Activated CD4-positive, alpha-beta memory T cell treated with anti-CD3 and anti-CD28 coated beads, Interleukin-2, amount 10 ng/mL, durations not matched to agents 7 days and 5 days (primary cell): ENCODE measurements at regions of chr12 and their contacts with region 1.

Region 1: DNA sequence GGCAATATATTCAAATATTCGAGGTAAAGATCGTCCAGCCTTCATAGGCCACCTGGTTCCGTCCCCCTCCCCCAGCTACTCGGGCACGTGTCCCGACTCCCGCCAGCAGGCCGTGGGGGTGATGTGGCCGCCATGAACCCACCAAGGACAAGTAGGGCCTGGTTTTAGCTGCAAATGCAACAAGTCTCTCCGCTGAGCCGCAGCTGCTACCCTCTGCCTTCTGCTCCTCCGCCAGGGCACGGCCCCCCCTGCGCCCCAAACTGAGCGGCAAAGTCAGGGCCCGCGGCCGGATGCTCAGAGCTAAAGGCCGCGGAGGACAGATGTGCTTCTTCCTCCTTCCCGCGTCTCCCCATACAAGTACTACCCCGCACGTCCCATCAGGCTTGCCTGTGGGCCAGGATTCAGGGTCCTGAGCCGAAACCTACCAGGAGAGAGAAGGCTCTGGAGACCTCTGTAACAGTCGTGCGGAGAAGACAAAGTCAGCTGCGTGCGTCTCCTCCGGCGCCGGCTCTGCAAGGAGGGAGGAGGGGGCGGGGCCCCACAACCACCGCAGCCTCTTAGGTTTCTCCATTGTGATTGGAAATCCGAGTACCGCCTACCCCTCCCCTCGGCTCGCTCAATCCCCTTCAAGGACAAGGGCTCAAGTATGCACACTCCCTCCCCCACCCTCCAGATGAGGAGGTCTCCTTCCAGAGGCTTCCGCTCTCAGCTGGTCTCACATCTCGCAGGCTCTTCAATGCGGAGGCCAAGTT is at the start of gene LDHB:
- DNase-seq: peak; percentile 95
- H3K4me3 Mint-ChIP-seq: peak within 1 kb of the TSS; percentile 82
- H3K27ac Mint-ChIP-seq: peak within 1 kb of the TSS; percentile 97
- H3K4me1 Mint-ChIP-seq: peaks cover 42% of the 10 kb centered on the region
- H3K27me3 Mint-ChIP-seq: no peaks in the 10 kb centered on the region
- total RNA-seq, gene LDHB: 955 to 985 TPM

Region 2: GRCh38 chr12:21438643-21439042 is 218.9 kb before region 1 on chr12:
- CTCF ChIA-PET with region 1: interaction called, 6 read pairs
- POLR2A ChIA-PET with region 1: interaction called, 30 read pairs
- DNase-seq: no peak
- H3K4me3 Mint-ChIP-seq: peak overlapping the region; percentile 93
- H3K27ac Mint-ChIP-seq: peak overlapping the region; percentile 90
- H3K4me1 Mint-ChIP-seq: peaks cover 36% of the 10 kb centered on the region
- H3K27me3 Mint-ChIP-seq: peaks cover 9% of the 10 kb centered on the region

Region 3: GRCh38 chr12:21509768-21510167 is 147.7 kb before region 1 on chr12:
- CTCF ChIA-PET with region 1: no interaction called
- POLR2A ChIA-PET with region 1: interaction called, 16 read pairs
- DNase-seq: peak; percentile 24
- H3K4me3 Mint-ChIP-seq: peak overlapping the region; percentile 69
- H3K27ac Mint-ChIP-seq: peak overlapping the region; percentile 85
- H3K4me1 Mint-ChIP-seq: peaks cover 38% of the 10 kb centered on the region
- H3K27me3 Mint-ChIP-seq: no peaks in the 10 kb centered on the region

Region 4: GRCh38 chr12:21580748-21581516 is 76.6 kb before region 1 on chr12:
- CTCF ChIA-PET with region 1: no interaction called
- POLR2A ChIA-PET with region 1: no interaction called
- DNase-seq: no peak
- H3K4me3 Mint-ChIP-seq: no peak overlapping the region
- H3K27ac Mint-ChIP-seq: no peak overlapping the region
- H3K4me1 Mint-ChIP-seq: no peaks in the 10 kb centered on the region
- H3K27me3 Mint-ChIP-seq: peaks cover 2% of the 10 kb centered on the region

Region 5: GRCh38 chr12:21615431-21615830 is 42.1 kb before region 1 on chr12:
- CTCF ChIA-PET with region 1: no interaction called
- POLR2A ChIA-PET with region 1: interaction called, 14 read pairs
- DNase-seq: no peak
- H3K4me3 Mint-ChIP-seq: no peak overlapping the region
- H3K27ac Mint-ChIP-seq: peak overlapping the region; percentile 40
- H3K4me1 Mint-ChIP-seq: peaks cover 43% of the 10 kb centered on the region
- H3K27me3 Mint-ChIP-seq: no peaks in the 10 kb centered on the region

Region 6: GRCh38 chr12:21642707-21643389 is 14.7 kb before region 1 on chr12:
- CTCF ChIA-PET with region 1: no interaction called
- POLR2A ChIA-PET with region 1: interaction called, 50 read pairs
- DNase-seq: no peak
- H3K4me3 Mint-ChIP-seq: no peak overlapping the region
- H3K27ac Mint-ChIP-seq: peak overlapping the region; percentile 20
- H3K4me1 Mint-ChIP-seq: peaks cover 62% of the 10 kb centered on the region
- H3K27me3 Mint-ChIP-seq: no peaks in the 10 kb centered on the region

Region 7: GRCh38 chr12:21677622-21678277 is 20.2 kb after region 1 on chr12:
- CTCF ChIA-PET with region 1: interaction called, 26 read pairs
- POLR2A ChIA-PET with region 1: interaction called, 38 read pairs
- DNase-seq: no peak
- H3K4me3 Mint-ChIP-seq: no peak overlapping the region
- H3K27ac Mint-ChIP-seq: no peak overlapping the region
- H3K4me1 Mint-ChIP-seq: peaks cover 34% of the 10 kb centered on the region
- H3K27me3 Mint-ChIP-seq: no peaks in the 10 kb centered on the region